ENCODE measurements at regions of chr4 and their contacts with region 1.

Region 1: GRCh38 chr4:184100297-184100885 is 117.3 kb downstream of the ENPP6 start:
- DNase-seq: peak; percentile 11
- H3K4me3 Mint-ChIP-seq: no peak overlapping the region
- H3K27ac Mint-ChIP-seq: no peak overlapping the region
- H3K4me1 Mint-ChIP-seq: no peaks in the 10 kb centered on the region
- H3K27me3 Mint-ChIP-seq: peaks cover 2% of the 10 kb centered on the region

Region 2: GRCh38 chr4:183471946-183472708 is 628.3 kb before region 1 on chr4:
- intact Hi-C with region 1: loop called (anchors 5 kb)
- DNase-seq: peak; percentile 56
- H3K4me3 Mint-ChIP-seq: no peak overlapping the region
- H3K27ac Mint-ChIP-seq: no peak overlapping the region
- H3K4me1 Mint-ChIP-seq: peaks cover 6% of the 10 kb centered on the region
- H3K27me3 Mint-ChIP-seq: peaks cover 5% of the 10 kb centered on the region

Region 3: DNA sequence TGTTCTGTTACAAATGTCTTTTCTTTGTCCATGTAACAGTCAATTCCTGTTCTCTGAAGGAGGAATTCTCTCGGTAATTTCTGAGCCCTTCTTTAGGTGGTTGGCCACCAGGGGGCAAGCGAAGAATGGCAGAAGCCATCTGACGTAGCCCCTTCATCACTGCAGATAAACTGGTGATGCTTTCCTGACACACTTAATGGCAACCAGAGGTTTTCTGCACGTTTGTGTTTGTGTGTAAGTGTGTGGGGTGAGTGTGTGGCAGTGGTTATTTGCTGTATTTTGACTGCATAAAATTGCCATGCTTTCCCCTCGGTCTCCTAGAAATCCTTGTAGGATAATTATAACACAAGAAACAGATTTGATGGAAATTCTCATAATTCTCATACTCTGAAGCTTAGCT is 260.1 kb before region 1 on chr4:
- intact Hi-C with region 1: loop called (anchors 5 kb)
- DNase-seq: peak; percentile 37
- H3K4me3 Mint-ChIP-seq: no peak overlapping the region
- H3K27ac Mint-ChIP-seq: no peak overlapping the region
- H3K4me1 Mint-ChIP-seq: peaks cover 6% of the 10 kb centered on the region
- H3K27me3 Mint-ChIP-seq: peaks cover 8% of the 10 kb centered on the region

Region 4: GRCh38 chr4:184041156-184041555 is 59.2 kb before region 1 on chr4:
- intact Hi-C with region 1: no loop called
- DNase-seq: no peak
- H3K4me3 Mint-ChIP-seq: no peak overlapping the region
- H3K27ac Mint-ChIP-seq: no peak overlapping the region
- H3K4me1 Mint-ChIP-seq: peaks cover 15% of the 10 kb centered on the region
- H3K27me3 Mint-ChIP-seq: peaks cover 42% of the 10 kb centered on the region

Region 5: GRCh38 chr4:184196862-184197331 is 96.5 kb after region 1 on chr4:
- intact Hi-C with region 1: no loop called
- DNase-seq: no peak
- H3K4me3 Mint-ChIP-seq: no peak overlapping the region
- H3K27ac Mint-ChIP-seq: no peak overlapping the region
- H3K4me1 Mint-ChIP-seq: no peaks in the 10 kb centered on the region
- H3K27me3 Mint-ChIP-seq: peaks cover 5% of the 10 kb centered on the region

Region 6: DNA sequence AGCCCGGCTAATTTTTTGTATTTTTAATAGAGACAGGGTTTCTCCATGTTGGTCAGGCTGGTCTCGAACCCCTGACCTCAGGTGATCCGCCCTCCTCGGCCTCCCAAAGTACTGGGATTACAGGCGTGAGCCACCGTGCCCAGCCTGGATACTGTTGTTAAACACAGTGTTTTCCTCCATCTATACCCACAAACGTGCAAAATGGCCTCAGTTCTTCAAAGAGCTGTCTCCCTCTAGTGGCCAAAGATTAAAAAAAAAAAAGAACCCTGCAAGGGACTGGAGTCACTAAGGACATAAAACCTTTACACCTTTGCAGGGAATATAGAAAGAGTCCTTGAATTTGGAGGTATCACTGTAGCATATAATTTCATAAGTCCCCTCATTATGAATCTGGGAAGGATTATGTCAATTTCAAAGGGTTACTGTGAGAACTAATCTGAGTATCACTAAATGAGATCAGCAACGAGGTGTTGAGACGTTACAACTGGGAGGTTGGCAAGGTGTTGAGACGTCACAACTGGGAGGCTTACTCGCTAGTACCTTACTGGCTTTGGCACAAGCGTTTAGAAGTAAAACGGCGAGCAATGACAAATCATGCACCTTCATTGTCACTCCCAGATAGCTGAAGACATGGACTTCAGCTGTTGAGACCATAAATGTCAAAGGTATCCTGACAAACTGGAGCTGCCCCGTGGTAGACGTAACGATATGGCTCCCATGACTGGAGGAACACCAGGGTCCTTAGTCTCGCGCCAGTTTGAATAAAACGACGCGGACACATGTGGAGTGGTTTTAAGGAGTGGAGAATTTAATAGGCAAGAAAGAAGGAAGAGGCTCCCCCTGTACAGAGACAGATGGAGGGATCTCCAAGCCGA is 150.6 kb after region 1 on chr4:
- intact Hi-C with region 1: loop called (anchors 5 kb)
- DNase-seq: no peak
- H3K4me3 Mint-ChIP-seq: peak overlapping the region; percentile 27
- H3K27ac Mint-ChIP-seq: peak overlapping the region; percentile 94
- H3K4me1 Mint-ChIP-seq: peaks cover 38% of the 10 kb centered on the region
- H3K27me3 Mint-ChIP-seq: peaks cover 1% of the 10 kb centered on the region

Measured in activated T-helper 1 cell treated with anti-CD3 and anti-CD28 coated beads, Interleukin-12 subunit alpha, Interleukin-12 subunit beta, Interleukin-2, Interleukin-4 antibody, amounts not matched to agents 30 ng/mL and 10 ng/mL and 1 ng/mL, durations not matched to agents 14 hours and 24 hours and 36 hours (primary cell).